Activated CD4-positive, alpha-beta memory T cell treated with anti-CD3 and anti-CD28 coated beads for 36 hours (primary cell): ENCODE measurements at regions of chr3 and their contacts with region 1.

Region 1: GRCh38 chr3:73100741-73101559 is 39.5 kb downstream of the EBLN2 start:
- DNase-seq: peak; percentile 85
- H3K4me3 Mint-ChIP-seq: no peak overlapping the region
- H3K27ac Mint-ChIP-seq: no peak overlapping the region
- H3K4me1 Mint-ChIP-seq: no peaks in the 10 kb centered on the region
- H3K27me3 Mint-ChIP-seq: peaks cover 4% of the 10 kb centered on the region

Region 2: GRCh38 chr3:73432023-73432705 is 331.2 kb after region 1 on chr3:
- CTCF ChIA-PET with region 1: interaction called, 4 read pairs
- POLR2A ChIA-PET with region 1: no interaction called
- intact Hi-C with region 1: loop called (anchors 1 kb)
- DNase-seq: no peak
- H3K4me3 Mint-ChIP-seq: no peak overlapping the region
- H3K27ac Mint-ChIP-seq: no peak overlapping the region
- H3K4me1 Mint-ChIP-seq: no peaks in the 10 kb centered on the region
- H3K27me3 Mint-ChIP-seq: peaks cover 1% of the 10 kb centered on the region